Activated T-helper 1 cell treated with anti-CD3 and anti-CD28 coated beads, Interleukin-12 subunit alpha, Interleukin-12 subunit beta, Interleukin-2, Interleukin-4 antibody, amounts not matched to agents 30 ng/mL and 10 ng/mL and 1 ng/mL, durations not matched to agents 14 hours and 24 hours and 36 hours (primary cell): ENCODE measurements at regions of chr14 and their contacts with region 1.

Region 1: DNA sequence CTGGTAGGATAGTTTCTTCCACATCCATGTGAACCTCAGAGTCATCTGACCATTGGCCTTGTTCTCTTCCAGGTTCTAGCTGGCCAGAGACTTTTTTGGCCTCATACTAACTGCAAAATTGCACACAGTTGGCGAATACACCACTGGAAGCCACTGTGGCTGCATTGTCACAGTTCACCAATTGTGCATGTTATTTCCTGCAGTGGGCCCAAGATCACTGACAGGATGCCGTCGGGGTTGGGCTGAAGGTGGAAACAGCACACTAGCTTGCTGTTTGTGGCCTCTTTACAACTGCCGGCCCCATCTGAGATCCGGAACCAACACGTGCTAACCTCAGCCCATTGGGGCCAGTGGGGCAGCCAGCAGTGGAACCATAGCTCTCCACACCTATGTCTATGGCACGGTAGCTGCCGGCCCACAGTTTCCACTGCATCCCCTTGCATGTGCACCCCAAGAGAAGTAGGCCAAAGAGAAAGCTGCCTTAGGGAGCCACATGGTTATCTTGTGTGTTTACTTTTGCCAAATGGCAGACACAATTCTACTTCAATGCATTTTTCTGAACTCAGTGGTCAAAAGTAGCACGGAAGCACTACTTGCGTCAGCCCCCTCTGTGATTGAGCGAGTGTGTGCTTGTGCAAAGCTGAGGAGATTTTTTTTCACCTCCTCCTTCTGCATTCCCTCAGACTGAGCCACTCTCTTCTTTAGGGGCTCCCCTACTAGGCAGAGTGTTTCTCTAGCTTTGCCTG is 464.0 kb downstream of the RAD51B start:
- DNase-seq: peak; percentile 52
- H3K4me3 Mint-ChIP-seq: peak overlapping the region; percentile 40
- H3K27ac Mint-ChIP-seq: peak overlapping the region; percentile 92
- H3K4me1 Mint-ChIP-seq: peaks cover 57% of the 10 kb centered on the region
- H3K27me3 Mint-ChIP-seq: peaks cover 1% of the 10 kb centered on the region

Region 2: DNA sequence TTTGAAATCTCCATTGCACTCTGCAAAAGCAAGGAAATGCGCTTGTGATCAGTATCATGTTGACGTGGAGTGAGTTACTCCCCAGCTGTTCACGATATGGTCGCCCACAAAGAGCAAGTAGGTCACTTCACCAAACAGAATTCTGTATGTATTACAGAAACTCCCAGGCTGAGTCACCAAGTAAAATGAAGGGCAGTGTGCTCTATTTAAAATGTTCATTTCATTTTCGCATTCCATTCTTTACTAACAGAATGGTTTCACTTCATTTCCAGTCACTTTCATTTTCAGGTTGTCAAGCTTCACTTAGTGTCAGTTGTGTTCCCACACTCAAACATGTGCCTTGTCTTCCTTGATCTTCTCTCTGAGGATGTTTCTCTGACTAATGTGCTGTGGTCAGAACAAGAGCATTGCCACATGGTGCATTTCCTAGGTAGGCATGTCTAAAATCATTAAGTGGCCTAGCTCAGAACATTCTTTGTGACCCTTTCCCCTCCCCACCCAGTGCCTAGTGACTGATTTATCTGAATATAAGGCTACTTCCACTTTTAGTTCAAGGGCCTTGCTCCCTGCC is 72.7 kb before region 1 on chr14:
- intact Hi-C with region 1: loop called (anchors 1 kb)
- DNase-seq: peak; percentile 55
- H3K4me3 Mint-ChIP-seq: peak overlapping the region; percentile 66
- H3K27ac Mint-ChIP-seq: peak overlapping the region; percentile 73
- H3K4me1 Mint-ChIP-seq: peaks cover 49% of the 10 kb centered on the region
- H3K27me3 Mint-ChIP-seq: no peaks in the 10 kb centered on the region

Region 3: GRCh38 chr14:68248481-68249255 is 34.9 kb before region 1 on chr14:
- intact Hi-C with region 1: loop called (anchors 1 kb)
- DNase-seq: no peak
- H3K4me3 Mint-ChIP-seq: no peak overlapping the region
- H3K27ac Mint-ChIP-seq: no peak overlapping the region
- H3K4me1 Mint-ChIP-seq: peaks cover 41% of the 10 kb centered on the region
- H3K27me3 Mint-ChIP-seq: no peaks in the 10 kb centered on the region

Region 4: GRCh38 chr14:68312884-68313610 is 29.5 kb after region 1 on chr14:
- intact Hi-C with region 1: loop called (anchors 2 kb)
- DNase-seq: no peak
- H3K4me3 Mint-ChIP-seq: no peak overlapping the region
- H3K27ac Mint-ChIP-seq: no peak overlapping the region
- H3K4me1 Mint-ChIP-seq: peaks cover 22% of the 10 kb centered on the region
- H3K27me3 Mint-ChIP-seq: no peaks in the 10 kb centered on the region

Region 5: DNA sequence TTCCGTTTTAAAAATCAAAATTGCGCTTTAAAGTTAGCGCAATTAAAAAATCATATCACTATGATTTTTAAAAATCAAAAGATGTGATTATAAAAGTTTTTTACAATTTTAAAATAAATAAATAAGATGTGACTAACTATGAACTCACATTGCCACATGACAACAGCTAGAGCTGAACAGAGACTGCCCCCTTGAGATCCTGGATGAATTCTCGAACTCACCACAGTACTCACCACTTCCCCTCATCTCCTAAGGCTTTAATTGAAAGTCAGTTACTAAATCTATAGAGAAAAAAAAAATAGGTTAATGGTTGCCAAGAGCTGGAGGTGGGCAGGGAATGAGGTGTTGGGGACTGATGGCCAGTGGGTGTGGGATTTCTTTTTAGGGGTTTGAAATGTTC is 125.1 kb after region 1 on chr14:
- intact Hi-C with region 1: loop called (anchors 5 kb)
- DNase-seq: no peak
- H3K4me3 Mint-ChIP-seq: no peak overlapping the region
- H3K27ac Mint-ChIP-seq: no peak overlapping the region
- H3K4me1 Mint-ChIP-seq: peaks cover 34% of the 10 kb centered on the region
- H3K27me3 Mint-ChIP-seq: no peaks in the 10 kb centered on the region

Region 6: GRCh38 chr14:68685419-68686204 is 402.1 kb after region 1 on chr14:
- intact Hi-C with region 1: loop called (anchors 1 kb)
- DNase-seq: peak; percentile 71
- H3K4me3 Mint-ChIP-seq: peak overlapping the region; percentile 45
- H3K27ac Mint-ChIP-seq: peak overlapping the region; percentile 86
- H3K4me1 Mint-ChIP-seq: peaks cover 61% of the 10 kb centered on the region
- H3K27me3 Mint-ChIP-seq: peaks cover 2% of the 10 kb centered on the region

Region 7: DNA sequence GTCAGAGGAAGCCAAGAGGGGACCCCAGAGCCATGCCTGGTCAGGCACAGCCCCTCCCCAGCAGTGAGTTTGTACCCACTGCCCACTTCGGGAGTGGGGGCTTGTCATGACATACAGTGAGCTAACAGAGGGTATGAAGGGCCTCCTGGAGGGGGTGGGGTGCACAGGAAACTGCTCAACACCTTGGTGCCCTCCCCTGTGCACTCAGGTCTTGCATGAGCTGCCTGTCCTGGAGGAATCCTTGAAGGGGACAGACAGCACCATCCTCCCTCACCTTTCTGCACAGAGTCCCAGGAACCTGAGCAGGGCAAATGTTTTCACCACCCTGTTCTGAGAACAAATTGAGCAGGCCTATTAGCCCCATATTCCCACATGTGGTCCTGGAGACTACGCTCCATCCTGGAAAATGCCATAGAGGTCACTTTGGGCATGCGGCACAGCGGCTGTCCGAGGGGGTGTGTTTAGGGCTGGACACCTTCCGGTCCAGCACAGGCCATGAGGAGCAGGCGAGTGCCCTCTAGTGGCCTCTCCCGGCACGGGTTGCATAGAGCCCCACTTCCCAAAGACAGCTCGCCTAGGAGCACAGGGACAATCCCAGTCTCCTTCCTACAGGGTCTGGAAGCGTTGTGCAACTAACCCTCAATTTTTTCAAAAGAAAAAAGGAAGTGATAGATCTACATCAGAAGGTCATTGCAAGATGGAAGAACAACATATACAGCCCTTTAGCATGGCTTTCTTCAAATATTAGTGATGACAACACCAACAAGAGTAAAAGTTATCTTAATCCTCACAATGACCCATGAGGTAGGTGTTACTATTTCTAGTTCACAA is 541.2 kb after region 1 on chr14:
- intact Hi-C with region 1: loop called (anchors 1 kb)
- DNase-seq: no peak
- H3K4me3 Mint-ChIP-seq: no peak overlapping the region
- H3K27ac Mint-ChIP-seq: no peak overlapping the region
- H3K4me1 Mint-ChIP-seq: peaks cover 22% of the 10 kb centered on the region
- H3K27me3 Mint-ChIP-seq: peaks cover 5% of the 10 kb centered on the region